PC-9 (cell line): ENCODE measurements at regions of chr19 and their contacts with region 1.

Region 1: GRCh38 chr19:46451352-46451751 is 20.0 kb downstream of the PNMA8A start:
- DNase-seq: no peak
- H3K4me3 ChIP-seq: no peak overlapping the region
- H3K27ac ChIP-seq: no peak overlapping the region
- H3K4me1 ChIP-seq: no peaks in the 10 kb centered on the region
- H3K27me3 ChIP-seq: peaks cover 53% of the 10 kb centered on the region
- CTCF ChIP-seq: no peak

Region 2: DNA sequence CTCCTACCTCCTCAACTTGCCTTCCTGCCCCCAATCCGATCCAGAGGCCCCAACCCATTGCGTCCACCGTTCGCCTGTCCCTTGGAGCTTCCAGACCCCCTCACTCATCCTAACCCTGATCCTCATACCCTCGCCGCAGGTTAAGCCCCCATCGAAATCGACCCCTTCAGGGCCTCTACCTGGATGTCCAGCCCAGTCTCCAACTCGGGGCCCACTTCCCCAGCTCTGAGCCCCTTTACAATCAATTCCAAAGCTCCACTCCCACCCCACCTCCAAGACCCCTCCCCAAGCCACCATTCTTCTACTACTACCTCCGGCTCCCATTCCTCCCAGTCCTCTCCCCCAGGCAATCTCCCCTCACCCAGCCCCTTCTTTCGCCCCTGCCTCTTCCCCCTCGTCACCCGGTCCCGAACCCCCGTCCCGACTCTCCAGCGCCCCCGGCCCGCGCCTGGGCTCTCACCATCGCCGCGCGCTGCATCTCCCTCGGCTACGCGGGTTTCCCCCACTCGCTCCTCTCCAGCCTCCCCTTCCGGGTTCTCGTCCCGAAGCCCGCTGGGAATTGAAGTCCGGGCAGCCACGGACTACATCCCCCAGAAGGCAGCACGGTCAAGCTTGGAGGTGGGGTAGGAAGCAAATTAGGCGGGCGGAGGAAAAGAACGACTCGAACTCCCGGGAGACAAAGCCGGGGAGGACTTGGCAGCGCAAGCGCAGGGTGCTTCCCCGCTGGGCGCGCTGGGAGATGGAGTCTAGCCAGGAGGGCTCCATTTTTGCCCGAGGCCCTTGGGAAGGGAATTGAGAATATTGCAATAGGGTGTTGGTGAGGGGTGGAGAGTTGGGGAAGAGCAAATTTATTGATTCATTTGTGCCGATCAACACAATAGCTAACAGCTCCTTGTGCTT is 720.7 kb before region 1 on chr19 and contains the start of gene FBXO46:
- CTCF ChIA-PET with region 1: no interaction called
- POLR2A ChIA-PET with region 1: no interaction called
- intact Hi-C with region 1: no loop called
- DNase-seq: peak; percentile 94 to 97
- H3K4me3 ChIP-seq: peak within 1 kb of the TSS; percentile 93
- H3K27ac ChIP-seq: peak within 1 kb of the TSS; percentile 46
- H3K4me1 ChIP-seq: peaks cover 9% of the 10 kb centered on the region
- H3K27me3 ChIP-seq: no peaks in the 10 kb centered on the region
- CTCF ChIP-seq: no peak; the same call in 1 of the 2 replicates
- total RNA-seq, gene FBXO46: 33.3 and 45.5 TPM in 2 replicates

Region 3: DNA sequence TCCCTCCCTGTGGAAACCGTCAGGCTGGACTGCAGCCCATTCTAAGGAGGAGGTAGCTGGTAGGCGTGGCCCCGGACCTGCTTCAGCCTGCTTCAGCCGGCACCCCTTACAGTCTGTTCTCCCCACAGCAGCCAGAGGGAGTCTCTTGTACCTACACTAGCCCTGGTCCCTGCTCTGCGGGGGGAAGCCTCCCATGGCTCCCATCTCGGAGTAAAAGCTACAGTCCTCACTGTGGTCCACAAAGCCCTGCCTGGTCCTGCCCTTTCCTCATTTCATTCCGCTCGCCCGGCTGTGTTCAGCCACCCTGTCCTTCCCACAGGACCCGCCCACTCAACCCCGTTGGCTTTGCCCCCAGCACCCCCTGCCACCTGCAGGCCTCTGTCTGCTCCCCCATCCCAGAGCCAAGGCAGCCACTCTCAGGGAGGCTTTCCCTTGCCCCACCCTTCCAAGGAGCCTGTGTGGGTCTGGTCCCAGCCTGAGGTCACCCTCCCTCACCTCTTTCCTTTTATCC is 429.8 kb before region 1 on chr19:
- CTCF ChIA-PET with region 1: interaction called, 10 read pairs
- POLR2A ChIA-PET with region 1: no interaction called
- intact Hi-C with region 1: no loop called
- DNase-seq: no peak
- H3K4me3 ChIP-seq: no peak overlapping the region
- H3K27ac ChIP-seq: no peak overlapping the region
- H3K4me1 ChIP-seq: no peaks in the 10 kb centered on the region
- H3K27me3 ChIP-seq: no peaks in the 10 kb centered on the region
- CTCF ChIP-seq: no peak

Region 4: DNA sequence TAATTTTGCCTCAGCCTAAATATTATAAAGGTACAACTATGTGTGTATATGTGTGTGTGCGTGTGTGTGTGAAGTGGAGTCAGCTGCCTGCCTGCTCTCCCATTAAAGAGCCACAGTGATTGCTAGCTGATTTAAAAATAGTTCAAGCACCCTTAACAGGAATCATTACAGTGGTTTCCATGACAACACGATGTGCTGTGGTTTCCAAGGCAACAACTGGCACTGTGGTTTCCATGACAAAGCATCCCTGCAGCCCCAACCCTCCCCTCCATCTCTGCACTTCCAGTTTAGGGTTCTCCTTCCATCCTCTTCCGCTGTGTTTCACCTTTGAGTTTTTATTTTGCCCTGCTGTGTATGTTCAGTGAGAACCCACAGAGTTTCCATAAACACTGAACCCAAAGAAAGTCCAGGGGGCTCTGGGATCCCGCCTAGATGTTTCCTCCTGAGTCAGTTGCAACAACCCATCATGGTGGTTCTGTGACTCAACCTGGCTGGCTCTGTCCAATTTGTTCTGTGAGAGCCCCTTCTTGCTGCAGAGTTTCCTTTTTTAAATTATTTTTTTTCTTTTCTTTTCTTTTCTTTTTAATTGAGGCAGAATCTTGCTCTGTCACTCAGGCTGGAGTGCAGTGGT is 27.1 kb after region 1 on chr19:
- CTCF ChIA-PET with region 1: no interaction called
- POLR2A ChIA-PET with region 1: no interaction called
- intact Hi-C with region 1: no loop called
- DNase-seq: no peak
- H3K4me3 ChIP-seq: no peak overlapping the region
- H3K27ac ChIP-seq: no peak overlapping the region
- H3K4me1 ChIP-seq: 0 out of 2 replicates have a peak, but pooled peaks cover 5% of the 10 kb centered on the region
- H3K27me3 ChIP-seq: peaks cover 53% of the 10 kb centered on the region
- CTCF ChIP-seq: no peak